HepG2 (cell line): ENCODE measurements at regions of chr1 and their contacts with region 1.

Region 1: GRCh38 chr1:113146242-113147072 is 73.5 kb downstream of the LRIG2 start:
- DNase-seq: peak; percentile 87
- ATAC-seq: peak; percentile 87
- H3K4me3 ChIP-seq: peak overlapping the region; percentile 33 to 64 (median 44)
- H3K27ac ChIP-seq: peak overlapping the region; percentile 81
- H3K4me1 ChIP-seq: peaks cover 37% of the 10 kb centered on the region
- H3K27me3 ChIP-seq: no peaks in the 10 kb centered on the region
- CTCF ChIP-seq: no peak
- EP300 ChIP-seq: peak in 1 of 2 experiments; percentile 64; a peak in 1 of 4 replicates
- POLR2A ChIP-seq: peak in 1 of 2 experiments; percentile 41; a peak in 1 of 4 replicates
- RAD21 ChIP-seq: no peak

Region 2: GRCh38 chr1:113219377-113219776 is 72.9 kb after region 1 on chr1:
- CTCF ChIA-PET with region 1: no interaction called
- POLR2A ChIA-PET with region 1: no interaction called
- in situ Hi-C with region 1: no loop called
- intact Hi-C with region 1: loop called (anchors 5 kb)
- DNase-seq: no peak
- ATAC-seq: peak; percentile 65
- H3K4me3 ChIP-seq: no peak overlapping the region
- H3K27ac ChIP-seq: no peak overlapping the region
- H3K4me1 ChIP-seq: peaks cover 33% of the 10 kb centered on the region
- H3K27me3 ChIP-seq: no peaks in the 10 kb centered on the region
- CTCF ChIP-seq: peak; percentile 47; the same call in 1 of the 2 replicates
- EP300 ChIP-seq: no peak
- POLR2A ChIP-seq: no peak
- RAD21 ChIP-seq: no peak